PC-9 (cell line): ENCODE measurements at regions of chr3 and their contacts with region 1.

Region 1: DNA sequence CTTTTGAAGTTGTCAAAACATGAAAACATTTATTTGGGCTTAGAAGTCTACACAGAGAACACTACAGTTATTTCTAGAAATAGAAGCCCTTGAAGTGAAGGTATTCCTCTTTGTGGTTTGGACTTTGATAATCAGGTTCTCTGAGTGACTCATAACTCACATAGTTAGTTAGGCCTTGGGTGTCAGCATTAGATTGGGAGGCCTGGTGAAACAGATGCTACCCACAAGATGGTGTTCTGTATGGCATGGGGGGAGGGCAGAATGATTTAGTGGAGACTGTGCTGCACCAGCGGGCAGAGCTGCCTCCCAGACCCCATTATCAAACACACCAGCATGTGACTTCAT is 108.9 kb upstream of the ETV5 start:
- DNase-seq: peak; percentile 20 to 58
- H3K4me3 ChIP-seq: no peak overlapping the region
- H3K27ac ChIP-seq: no peak overlapping the region
- H3K4me1 ChIP-seq: 0 out of 2 replicates have a peak, but pooled peaks cover 3% of the 10 kb centered on the region
- H3K27me3 ChIP-seq: no peaks in the 10 kb centered on the region
- CTCF ChIP-seq: no peak

Region 2: DNA sequence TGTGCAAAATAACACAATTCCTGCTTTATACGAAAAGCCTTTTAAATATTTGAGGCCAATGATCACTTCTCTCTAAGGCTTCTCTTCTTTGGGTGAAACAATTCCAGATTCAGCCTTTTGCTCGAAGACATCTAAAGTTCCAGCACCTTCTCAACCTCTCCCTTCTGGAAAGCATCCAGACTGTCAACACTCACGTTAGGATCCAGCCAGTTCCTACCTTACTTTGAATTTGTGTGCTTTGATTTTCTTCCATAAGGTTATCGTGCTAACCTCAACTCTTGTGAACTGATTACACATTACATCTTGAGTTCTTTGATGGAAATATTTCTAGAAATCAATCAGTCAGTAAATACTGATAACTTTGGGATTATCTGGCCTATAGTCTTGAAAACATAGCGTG is 16.4 kb after region 1 on chr3:
- CTCF ChIA-PET with region 1: interaction called, 10 read pairs
- POLR2A ChIA-PET with region 1: no interaction called
- intact Hi-C with region 1: no loop called
- DNase-seq: no peak
- H3K4me3 ChIP-seq: no peak overlapping the region
- H3K27ac ChIP-seq: no peak overlapping the region
- H3K4me1 ChIP-seq: no peaks in the 10 kb centered on the region
- H3K27me3 ChIP-seq: no peaks in the 10 kb centered on the region
- CTCF ChIP-seq: no peak